ENCODE measurements at regions of chr6 and their contacts with region 1.

Region 1: GRCh38 chr6:35297601-35298481 is at the start of gene DEF6:
- DNase-seq: peak; percentile 49
- H3K4me3 ChIP-seq: no peak within 1 kb of the TSS
- H3K27ac ChIP-seq: no peak within 1 kb of the TSS
- H3K4me1 ChIP-seq: peaks cover 0 to 4% of the 10 kb centered on the region in 2 experiments; a peak in 1 of 4 replicates
- H3K27me3 ChIP-seq: no peaks in the 10 kb centered on the region
- CTCF ChIP-seq: peak; percentile 24; the same call in 1 of the 2 replicates
- EP300 ChIP-seq: no peak
- RAD21 ChIP-seq: peak; percentile 53
- polyA plus RNA-seq, gene DEF6: 0.13 and 0.16 TPM in 2 replicates

Region 2: DNA sequence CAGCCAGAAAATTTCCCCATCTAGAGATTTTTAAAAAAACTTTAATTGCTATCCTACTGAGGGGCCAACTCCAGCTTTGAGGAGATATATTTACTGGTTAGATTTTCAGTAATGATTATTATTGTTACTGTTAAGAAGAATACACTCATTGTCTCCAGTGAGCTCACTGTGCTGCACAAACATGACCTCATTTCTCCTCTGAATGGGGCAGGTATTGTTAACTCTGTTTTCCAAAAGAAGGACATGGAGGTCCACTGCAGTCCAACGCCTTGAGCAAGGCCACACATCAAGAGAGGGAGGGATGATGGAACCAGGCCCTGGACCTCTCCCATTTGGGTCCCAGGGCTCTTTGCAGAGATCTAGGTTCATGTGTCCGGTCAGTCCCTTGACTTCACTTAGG is 98.0 kb before region 1 on chr6:
- CTCF ChIA-PET with region 1: no interaction called
- POLR2A ChIA-PET with region 1: no interaction called
- DNase-seq: no peak
- H3K4me3 ChIP-seq: no peak overlapping the region
- H3K27ac ChIP-seq: no peak overlapping the region
- H3K4me1 ChIP-seq: no peaks in the 10 kb centered on the region
- H3K27me3 ChIP-seq: no peaks in the 10 kb centered on the region
- CTCF ChIP-seq: no peak
- EP300 ChIP-seq: no peak
- RAD21 ChIP-seq: no peak

Region 3: GRCh38 chr6:35267461-35267860 is 30.4 kb before region 1 on chr6:
- CTCF ChIA-PET with region 1: interaction called, 12 read pairs
- POLR2A ChIA-PET with region 1: no interaction called
- DNase-seq: no peak
- H3K4me3 ChIP-seq: no peak overlapping the region
- H3K27ac ChIP-seq: no peak overlapping the region
- H3K4me1 ChIP-seq: peaks cover 0 to 4% of the 10 kb centered on the region in 2 experiments; a peak in 1 of 4 replicates
- H3K27me3 ChIP-seq: no peaks in the 10 kb centered on the region
- CTCF ChIP-seq: no peak
- EP300 ChIP-seq: no peak
- RAD21 ChIP-seq: no peak

Region 4: DNA sequence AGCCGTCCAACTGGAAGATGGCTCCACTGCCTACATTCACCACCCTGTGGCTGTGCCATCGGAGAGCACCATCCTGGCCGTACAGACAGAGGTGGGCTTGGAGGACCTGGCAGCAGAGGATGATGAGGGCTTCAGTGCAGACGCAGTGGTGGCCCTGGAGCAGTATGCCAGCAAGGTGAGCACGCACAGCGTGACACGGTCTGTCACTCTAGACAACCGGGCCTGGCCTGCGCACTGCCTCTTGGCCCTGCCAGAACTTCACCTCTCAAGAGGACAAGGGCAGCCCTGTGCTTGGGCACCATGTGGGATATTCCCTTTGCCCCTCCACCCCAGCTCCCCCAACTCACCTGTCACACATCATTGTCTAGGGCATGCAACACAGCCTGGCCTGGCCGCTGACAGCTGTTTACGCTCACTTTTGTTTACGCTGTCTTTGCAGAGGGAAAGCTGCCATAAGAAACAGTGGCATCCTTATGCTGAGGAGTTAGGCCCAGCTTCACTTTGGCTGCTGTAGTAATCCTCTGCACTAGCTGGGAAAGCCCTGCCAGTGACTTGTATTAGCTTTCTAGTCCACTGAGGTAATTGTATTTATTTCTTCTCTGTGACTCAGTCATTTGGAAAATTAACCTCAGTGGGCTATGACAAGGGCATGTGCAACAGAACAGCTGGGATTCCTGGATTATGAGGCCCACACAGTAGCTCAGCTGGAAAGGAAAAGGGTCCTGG is 10.0 kb before region 1 on chr6:
- CTCF ChIA-PET with region 1: interaction called, 15 read pairs
- POLR2A ChIA-PET with region 1: no interaction called
- DNase-seq: no peak
- H3K4me3 ChIP-seq: no peak overlapping the region
- H3K27ac ChIP-seq: no peak overlapping the region
- H3K4me1 ChIP-seq: no peaks in the 10 kb centered on the region
- H3K27me3 ChIP-seq: no peaks in the 10 kb centered on the region
- CTCF ChIP-seq: no peak
- EP300 ChIP-seq: no peak
- RAD21 ChIP-seq: no peak

Region 5: DNA sequence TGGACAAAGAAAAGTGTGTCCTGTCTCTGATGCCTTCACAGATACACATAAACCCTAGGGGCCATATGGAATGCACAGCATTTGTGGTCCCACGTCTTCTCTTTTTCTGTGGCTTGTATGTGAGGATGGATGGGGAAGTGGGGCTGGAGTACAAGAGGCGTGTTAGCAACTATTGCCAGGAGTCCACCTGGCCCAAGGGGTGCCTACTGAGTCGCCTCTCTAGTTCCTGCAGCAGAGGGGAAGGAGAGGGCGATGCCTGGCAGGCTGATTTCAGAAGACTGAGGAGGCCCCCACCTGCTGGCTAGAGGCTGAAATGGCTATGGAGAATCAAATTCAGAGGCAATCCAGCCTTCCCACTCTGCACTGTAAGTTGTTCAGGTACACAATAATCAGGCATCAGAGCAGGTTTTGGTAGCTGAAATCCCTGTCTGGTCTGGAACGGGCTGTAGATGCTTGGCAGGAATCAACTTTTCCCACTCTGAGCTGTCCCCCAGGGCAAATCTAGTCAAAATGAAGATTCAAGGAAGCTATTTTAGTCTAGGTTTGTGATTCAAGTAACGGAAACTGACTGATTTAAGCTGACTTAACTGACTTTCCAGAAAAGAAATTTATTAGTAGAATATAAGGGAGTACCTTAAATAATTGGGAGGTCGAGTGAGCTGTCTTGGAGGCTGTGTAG is 29.6 kb after region 1 on chr6:
- CTCF ChIA-PET with region 1: interaction called, 61 read pairs
- POLR2A ChIA-PET with region 1: no interaction called
- DNase-seq: peak; percentile 69
- H3K4me3 ChIP-seq: no peak overlapping the region
- H3K27ac ChIP-seq: no peak overlapping the region
- H3K4me1 ChIP-seq: no peaks in the 10 kb centered on the region; a peak in 1 of 4 replicates
- H3K27me3 ChIP-seq: no peaks in the 10 kb centered on the region; the same call in 1 of the 2 replicates
- CTCF ChIP-seq: peak; percentile 58
- EP300 ChIP-seq: no peak
- RAD21 ChIP-seq: peak; percentile 67

Region 6: GRCh38 chr6:35468181-35468979 is 170.5 kb after region 1 on chr6 and contains the start of gene RPL10A:
- CTCF ChIA-PET with region 1: interaction called, 33 read pairs
- POLR2A ChIA-PET with region 1: no interaction called
- DNase-seq: peak; percentile 97
- H3K4me3 ChIP-seq: peak within 1 kb of the TSS; percentile 67 to 90
- H3K27ac ChIP-seq: peak within 1 kb of the TSS; percentile 85 to 89
- H3K4me1 ChIP-seq: peaks cover 23 to 26% of the 10 kb centered on the region in 2 experiments; a peak in 3 of 4 replicates
- H3K27me3 ChIP-seq: no peaks in the 10 kb centered on the region
- CTCF ChIP-seq: peak; percentile 96
- EP300 ChIP-seq: no peak
- RAD21 ChIP-seq: peak; percentile 77
- polyA plus RNA-seq, gene RPL10A: 2,393 and 3,548 TPM in 2 replicates

Region 7: GRCh38 chr6:35719830-35720733 is 422.2 kb after region 1 on chr6:
- CTCF ChIA-PET with region 1: no interaction called
- POLR2A ChIA-PET with region 1: no interaction called
- DNase-seq: peak; percentile 63
- H3K4me3 ChIP-seq: no peak overlapping the region
- H3K27ac ChIP-seq: peak overlapping the region in 1 of 2 experiments; percentile 51; a peak in 1 of 4 replicates
- H3K4me1 ChIP-seq: peaks cover 7 to 18% of the 10 kb centered on the region in 2 experiments; a peak in 1 of 4 replicates
- H3K27me3 ChIP-seq: no peaks in the 10 kb centered on the region; the same call in 1 of the 2 replicates
- CTCF ChIP-seq: no peak
- EP300 ChIP-seq: no peak
- RAD21 ChIP-seq: no peak

Measured in SK-N-SH (cell line).